Calu3 (cell line): ENCODE measurements at regions of chr17 and their contacts with region 1.

Region 1: DNA sequence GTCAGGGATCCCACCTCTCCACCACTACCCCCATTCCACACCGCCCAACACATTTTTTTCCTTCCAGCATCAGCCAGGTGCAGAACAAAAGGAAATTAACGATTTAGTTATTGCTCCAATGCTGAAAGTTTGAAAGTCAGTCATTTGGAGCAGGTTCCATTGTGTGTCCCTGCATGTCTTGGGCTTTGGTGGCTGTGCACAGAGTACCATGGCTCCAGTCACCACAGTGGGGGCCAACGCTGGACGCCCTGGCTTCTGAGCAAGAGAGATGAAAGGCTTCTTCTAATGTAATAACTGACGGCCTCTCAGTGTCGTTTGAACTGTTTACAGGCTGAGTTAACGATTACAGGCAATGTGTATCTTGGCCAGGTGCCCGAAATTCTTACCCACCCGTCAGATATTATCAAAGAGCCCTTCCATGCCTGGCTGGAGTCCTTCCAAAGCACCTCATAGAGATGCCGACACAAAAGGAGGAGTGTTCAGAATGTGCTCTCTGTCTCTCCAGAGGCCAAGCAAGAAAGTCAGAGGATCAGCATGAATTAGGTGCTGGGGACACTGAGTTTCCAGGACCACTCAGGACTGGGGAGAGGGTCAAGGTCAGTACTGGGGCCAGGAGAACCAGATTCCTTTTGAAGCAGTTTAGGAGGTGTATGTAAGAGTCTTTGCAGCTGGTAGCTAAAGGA is 25.9 kb downstream of the RNF43 start:
- DNase-seq: peak; percentile 85
- H3K4me3 Mint-ChIP-seq: peak overlapping the region; percentile 13
- H3K27ac Mint-ChIP-seq: no peak overlapping the region
- H3K4me1 Mint-ChIP-seq: peaks cover 41% of the 10 kb centered on the region
- H3K27me3 Mint-ChIP-seq: no peaks in the 10 kb centered on the region
- CTCF ChIP-seq: no peak

Region 2: GRCh38 chr17:58337600-58338453 is 53.6 kb before region 1 on chr17:
- CTCF ChIA-PET with region 1: no interaction called
- intact Hi-C with region 1: no loop called
- DNase-seq: no peak
- H3K4me3 Mint-ChIP-seq: no peak overlapping the region
- H3K27ac Mint-ChIP-seq: no peak overlapping the region
- H3K4me1 Mint-ChIP-seq: peaks cover 9% of the 10 kb centered on the region
- H3K27me3 Mint-ChIP-seq: no peaks in the 10 kb centered on the region
- CTCF ChIP-seq: no peak

Region 3: DNA sequence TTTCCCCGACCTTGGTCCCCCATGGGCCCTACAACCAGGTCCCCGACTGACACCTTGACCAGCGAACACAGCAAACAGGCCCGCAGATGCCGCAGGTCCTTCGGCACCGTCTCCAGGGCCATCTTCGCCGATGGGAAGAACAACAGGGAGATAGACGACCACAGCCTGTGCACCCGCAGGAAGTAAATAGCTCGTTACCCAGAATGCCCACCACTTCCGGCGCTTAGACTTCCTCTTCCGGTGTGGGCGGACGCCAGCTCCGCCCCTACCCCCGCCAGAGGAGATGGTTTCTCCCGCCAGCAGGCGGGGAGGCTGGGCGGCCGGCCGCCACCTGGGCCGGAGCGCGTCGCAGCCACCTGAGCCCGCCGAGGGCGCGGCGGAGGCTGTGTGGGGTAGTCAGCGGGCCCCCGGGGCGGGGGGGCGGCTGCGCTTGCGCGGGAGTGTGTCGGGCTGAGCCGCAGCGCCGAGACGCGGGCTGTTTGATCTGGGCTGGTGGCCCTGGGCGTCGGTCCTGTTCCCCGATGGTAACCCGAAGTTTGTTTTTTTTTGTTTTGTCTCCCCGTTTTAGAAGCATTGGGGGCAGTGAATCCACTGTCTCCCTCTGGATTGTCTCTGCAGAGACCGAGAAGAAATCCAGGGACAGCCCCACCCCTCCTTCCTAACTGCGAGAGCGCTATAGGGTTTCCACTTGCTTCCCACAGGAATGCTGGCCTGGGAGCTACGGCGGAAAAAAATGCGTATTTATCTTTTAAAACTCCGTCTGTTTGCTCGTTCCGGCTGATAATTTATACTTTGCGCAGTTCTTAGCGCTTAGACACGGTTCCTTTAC is 39.2 kb before region 1 on chr17 and contains the start of gene SUPT4H1:
- CTCF ChIA-PET with region 1: no interaction called
- intact Hi-C with region 1: loop called (anchors 5 kb)
- DNase-seq: peak; percentile 85
- H3K4me3 Mint-ChIP-seq: peak within 1 kb of the TSS; percentile 99
- H3K27ac Mint-ChIP-seq: peak within 1 kb of the TSS; percentile 93
- H3K4me1 Mint-ChIP-seq: peaks cover 8% of the 10 kb centered on the region
- H3K27me3 Mint-ChIP-seq: no peaks in the 10 kb centered on the region
- CTCF ChIP-seq: no peak
- total RNA-seq, gene SUPT4H1: 40.3 and 46.7 TPM in 2 replicates

Region 4: GRCh38 chr17:58402047-58402446 is 10.6 kb after region 1 on chr17:
- CTCF ChIA-PET with region 1: interaction called, 4 read pairs
- intact Hi-C with region 1: loop called (anchors 2 kb)
- DNase-seq: no peak
- H3K4me3 Mint-ChIP-seq: no peak overlapping the region
- H3K27ac Mint-ChIP-seq: no peak overlapping the region
- H3K4me1 Mint-ChIP-seq: peaks cover 30% of the 10 kb centered on the region
- H3K27me3 Mint-ChIP-seq: no peaks in the 10 kb centered on the region
- CTCF ChIP-seq: no peak